CD4-positive, alpha-beta T cell (primary cell): ENCODE measurements at regions of chr7 and their contacts with region 1.

Region 1: DNA sequence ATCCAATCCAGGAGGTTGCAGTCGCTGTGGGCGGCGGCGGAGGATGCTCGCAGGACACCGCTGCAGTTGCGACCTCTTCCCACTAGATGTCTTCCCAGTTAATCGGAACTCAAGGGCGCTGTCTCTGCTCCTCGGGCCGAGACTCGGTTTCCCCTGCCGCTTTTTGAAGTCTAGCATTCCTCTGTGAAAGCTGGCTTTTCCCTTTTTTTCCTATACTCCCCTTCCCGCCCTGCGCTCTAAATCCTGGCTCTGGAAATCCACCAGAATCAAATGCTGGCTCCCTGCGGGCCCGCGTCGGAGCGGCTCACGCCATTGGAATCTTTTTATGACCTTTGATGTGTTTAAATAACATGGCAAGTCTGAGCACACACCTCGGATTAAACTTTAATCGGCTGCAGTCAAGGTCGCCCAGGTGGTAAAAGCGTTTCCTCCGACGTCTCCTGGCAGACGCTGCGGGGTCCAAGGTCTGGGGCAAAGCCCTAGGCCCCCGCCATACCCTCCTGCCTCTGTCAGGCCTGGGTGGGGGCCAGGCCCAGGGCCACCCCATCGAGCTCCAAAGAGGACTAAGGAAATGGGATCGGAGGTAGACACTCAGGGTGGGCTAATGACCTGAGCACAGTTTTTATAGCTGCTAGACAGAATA is 10.7 kb upstream of the HOXA13 start:
- DNase-seq: peak in 7 of 14 experiments; percentile 31 to 69 (median 41)
- ATAC-seq: peak; percentile 69
- H3K4me3 ChIP-seq: peak overlapping the region; percentile 20
- H3K4me3 Mint-ChIP-seq: peak overlapping the region; percentile 59
- H3K27ac ChIP-seq: no peak overlapping the region
- H3K27ac Mint-ChIP-seq: no peak overlapping the region
- H3K4me1 ChIP-seq: peaks cover 27% of the 10 kb centered on the region
- H3K4me1 Mint-ChIP-seq: peaks cover 22% of the 10 kb centered on the region
- H3K27me3 ChIP-seq: peaks cover 81 to 100% of the 10 kb centered on the region in 2 experiments
- H3K27me3 Mint-ChIP-seq: peaks cover 98% of the 10 kb centered on the region
- CTCF ChIP-seq: peak; percentile 81

Region 2: GRCh38 chr7:27576360-27576944 is 365.9 kb after region 1 on chr7:
- CTCF ChIA-PET with region 1: no interaction called
- POLR2A ChIA-PET with region 1: no interaction called
- intact Hi-C with region 1: loop called in 1 of 2 experiments (anchors 5 kb)
- DNase-seq: peak in 3 of 14 experiments; percentile 34 to 53 (median 43)
- ATAC-seq: no peak
- H3K4me3 ChIP-seq: no peak overlapping the region
- H3K4me3 Mint-ChIP-seq: no peak overlapping the region
- H3K27ac ChIP-seq: no peak overlapping the region
- H3K27ac Mint-ChIP-seq: no peak overlapping the region
- H3K4me1 ChIP-seq: no peaks in the 10 kb centered on the region
- H3K4me1 Mint-ChIP-seq: no peaks in the 10 kb centered on the region
- H3K27me3 ChIP-seq: no peaks in the 10 kb centered on the region
- H3K27me3 Mint-ChIP-seq: no peaks in the 10 kb centered on the region
- CTCF ChIP-seq: peak; percentile 69

Region 3: GRCh38 chr7:27774717-27775328 is 564.3 kb after region 1 on chr7:
- CTCF ChIA-PET with region 1: no interaction called
- POLR2A ChIA-PET with region 1: no interaction called
- intact Hi-C with region 1: loop called in 1 of 2 experiments (anchors 5 kb)
- DNase-seq: peak in 3 of 14 experiments; percentile 32 to 43 (median 37)
- ATAC-seq: no peak
- H3K4me3 ChIP-seq: no peak overlapping the region
- H3K4me3 Mint-ChIP-seq: no peak overlapping the region
- H3K27ac ChIP-seq: no peak overlapping the region
- H3K27ac Mint-ChIP-seq: no peak overlapping the region
- H3K4me1 ChIP-seq: no peaks in the 10 kb centered on the region
- H3K4me1 Mint-ChIP-seq: peaks cover 63% of the 10 kb centered on the region
- H3K27me3 ChIP-seq: no peaks in the 10 kb centered on the region
- H3K27me3 Mint-ChIP-seq: no peaks in the 10 kb centered on the region
- CTCF ChIP-seq: peak; percentile 49

Region 4: DNA sequence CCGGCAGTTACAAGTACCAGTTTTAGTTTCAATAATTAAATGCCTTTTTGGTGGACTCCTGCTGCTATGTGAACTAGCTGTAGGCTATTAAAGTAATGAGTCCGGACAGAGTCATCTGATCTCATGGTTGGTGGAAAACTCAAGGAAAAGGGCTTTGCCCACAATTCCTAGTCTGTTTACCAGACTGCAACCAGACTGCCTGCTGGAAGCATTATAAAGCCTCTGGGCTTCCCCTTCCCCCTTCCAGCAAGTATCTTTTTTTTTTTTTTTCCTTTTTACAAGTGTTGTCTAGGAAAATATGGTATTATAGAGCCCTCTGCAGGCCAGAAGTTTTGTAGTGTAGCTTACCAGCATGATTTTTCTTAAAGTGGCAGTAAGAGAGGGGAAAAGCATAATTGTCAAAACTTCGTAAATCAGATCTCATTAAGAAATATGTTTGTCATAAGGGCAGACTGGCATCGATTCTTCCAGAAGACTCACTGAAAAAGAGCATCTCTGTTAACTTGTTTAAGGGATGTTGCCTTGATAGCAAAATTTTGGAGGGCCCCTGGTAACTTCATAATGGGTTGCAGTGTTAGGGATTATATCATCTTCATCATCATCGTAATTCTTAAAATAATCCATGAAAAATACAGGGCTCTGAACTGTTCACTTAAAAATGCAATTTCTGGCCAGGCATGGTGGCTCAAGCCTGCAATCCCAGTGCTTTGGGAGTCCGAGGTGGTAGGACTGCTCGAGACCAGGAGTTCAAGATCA is 710.7 kb after region 1 on chr7:
- CTCF ChIA-PET with region 1: no interaction called
- POLR2A ChIA-PET with region 1: no interaction called
- intact Hi-C with region 1: loop called (anchors 5 kb)
- DNase-seq: peak in 3 of 14 experiments; percentile 47 to 64 (median 58)
- ATAC-seq: peak; percentile 48
- H3K4me3 ChIP-seq: no peak overlapping the region
- H3K4me3 Mint-ChIP-seq: no peak overlapping the region
- H3K27ac ChIP-seq: no peak overlapping the region
- H3K27ac Mint-ChIP-seq: no peak overlapping the region
- H3K4me1 ChIP-seq: no peaks in the 10 kb centered on the region
- H3K4me1 Mint-ChIP-seq: no peaks in the 10 kb centered on the region
- H3K27me3 ChIP-seq: no peaks in the 10 kb centered on the region
- H3K27me3 Mint-ChIP-seq: no peaks in the 10 kb centered on the region
- CTCF ChIP-seq: peak; percentile 44

Region 5: DNA sequence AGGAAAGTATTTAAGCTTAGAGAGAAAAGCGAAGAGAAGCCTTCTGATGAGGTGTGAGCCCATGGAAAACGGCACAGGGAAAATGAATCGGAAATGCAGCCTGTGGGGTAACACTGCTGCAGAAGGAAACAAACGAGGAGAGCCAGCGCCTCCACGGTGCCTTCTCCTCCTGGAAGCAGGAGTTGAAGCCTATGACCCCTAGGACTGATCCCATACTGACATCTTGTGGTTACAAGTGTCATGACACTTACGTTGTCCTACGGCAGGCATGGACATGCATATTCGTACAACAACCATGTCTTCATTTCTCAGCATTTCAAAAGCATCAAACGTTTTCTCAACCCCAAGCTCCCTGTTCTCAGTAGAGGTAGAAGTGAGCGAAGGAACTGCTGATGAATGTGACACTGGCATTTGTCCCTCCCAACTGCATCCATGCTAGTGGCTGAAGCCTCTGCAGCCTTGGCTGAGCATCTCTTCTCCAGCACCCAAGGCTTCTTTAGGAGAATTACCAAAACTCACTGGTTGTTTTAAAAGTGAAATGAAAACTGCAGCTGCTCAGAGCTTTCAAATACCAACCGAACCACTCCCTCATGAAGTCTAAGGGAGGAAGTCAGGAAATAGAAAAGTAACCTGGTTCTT is 809.9 kb after region 1 on chr7:
- CTCF ChIA-PET with region 1: interaction called, 4 read pairs
- POLR2A ChIA-PET with region 1: no interaction called
- intact Hi-C with region 1: loop called in 1 of 2 experiments (anchors 5 kb)
- DNase-seq: peak in 11 of 14 experiments; percentile 3 to 76 (median 15)
- ATAC-seq: peak; percentile 76
- H3K4me3 ChIP-seq: no peak overlapping the region
- H3K4me3 Mint-ChIP-seq: no peak overlapping the region
- H3K27ac ChIP-seq: no peak overlapping the region
- H3K27ac Mint-ChIP-seq: no peak overlapping the region
- H3K4me1 ChIP-seq: peaks cover 6% of the 10 kb centered on the region
- H3K4me1 Mint-ChIP-seq: peaks cover 9% of the 10 kb centered on the region
- H3K27me3 ChIP-seq: no peaks in the 10 kb centered on the region
- H3K27me3 Mint-ChIP-seq: no peaks in the 10 kb centered on the region
- CTCF ChIP-seq: peak; percentile 88